Activated CD4-positive, alpha-beta T cell treated with anti-CD3 and anti-CD28 coated beads for 36 hours (primary cell): ENCODE measurements at regions of chr12 and their contacts with region 1.

Region 1: DNA sequence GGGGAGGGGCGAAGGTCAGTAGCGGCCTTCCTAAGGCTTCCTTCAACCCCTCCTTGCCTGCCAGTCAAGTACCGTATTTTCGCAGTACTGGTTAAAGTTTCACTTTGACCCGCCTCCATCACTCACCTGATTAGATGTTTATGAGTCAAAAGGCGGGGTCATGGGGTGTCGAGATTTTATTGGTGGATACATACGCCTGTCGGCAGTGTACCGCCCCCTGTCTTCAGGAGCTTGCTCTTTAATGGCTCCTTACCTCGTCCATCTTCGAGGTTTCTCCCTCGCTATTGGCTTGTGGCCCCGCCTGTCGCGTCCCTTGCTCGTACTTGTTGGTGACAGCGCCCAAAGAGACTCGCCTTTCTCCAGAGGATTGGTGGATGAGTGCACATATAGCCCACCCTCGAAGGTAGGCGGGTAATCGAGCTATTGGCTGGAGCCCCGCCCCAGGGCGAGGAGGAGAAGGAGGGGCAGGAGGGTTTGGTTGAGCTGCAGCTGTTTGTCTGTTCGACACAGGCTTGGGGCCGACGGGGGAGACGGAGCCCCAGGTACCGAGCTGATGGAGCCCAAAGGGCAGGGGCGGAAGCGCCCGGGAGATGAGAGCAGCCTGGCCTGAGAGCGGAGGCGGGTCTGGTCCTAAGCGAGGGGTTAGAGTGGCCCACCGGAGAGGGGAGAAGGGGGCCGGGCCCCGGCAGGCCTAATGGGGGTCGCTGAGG is at the start of gene RAB5B:
- DNase-seq: peak; percentile 98
- ATAC-seq: peak; percentile 93
- H3K4me3 Mint-ChIP-seq: no peak within 1 kb of the TSS
- H3K27ac Mint-ChIP-seq: no peak within 1 kb of the TSS
- H3K4me1 Mint-ChIP-seq: peaks cover 28% of the 10 kb centered on the region
- H3K27me3 Mint-ChIP-seq: no peaks in the 10 kb centered on the region
- total RNA-seq, gene RAB5B: 33.2 to 35.1 TPM

Region 2: DNA sequence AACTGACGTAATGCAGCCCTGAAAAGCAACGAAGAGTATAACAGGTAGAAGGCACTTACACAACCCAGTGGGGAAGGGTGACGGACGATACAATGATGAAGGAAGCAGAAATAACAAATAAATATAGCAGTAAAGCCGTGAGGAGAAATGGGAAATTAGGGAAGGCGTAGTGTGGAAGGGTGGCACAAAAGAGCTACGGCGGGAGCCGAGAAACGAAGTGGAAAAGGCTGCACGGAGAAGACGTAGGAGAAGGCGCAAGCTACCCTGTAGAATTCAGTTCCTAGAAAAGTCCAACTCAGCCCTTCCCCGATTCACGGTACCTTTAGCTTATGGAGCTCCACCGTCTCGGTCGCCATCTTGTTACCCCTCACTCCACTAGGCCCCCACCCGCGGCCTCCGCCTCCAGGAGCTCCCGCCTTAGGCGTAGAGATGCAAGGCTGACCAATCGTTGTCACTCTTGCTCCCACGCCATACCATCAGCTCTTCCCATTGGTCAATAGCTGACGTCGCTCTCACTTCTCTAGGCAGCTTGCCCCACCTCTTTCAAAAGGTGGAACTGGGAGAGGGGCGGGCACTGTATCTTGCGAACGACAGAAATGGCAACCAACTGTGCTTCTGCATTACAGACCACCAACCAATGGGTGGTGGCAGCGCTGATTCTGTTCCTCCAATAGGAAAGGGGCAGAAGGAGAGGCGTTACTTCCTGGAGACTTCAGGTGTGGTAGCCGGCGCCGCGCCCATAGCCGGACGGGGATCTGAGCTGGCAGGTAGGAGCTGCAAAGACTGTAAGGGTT is 156.2 kb before region 1 on chr12 and contains the starts of genes ORMDL2 and SARNP:
- CTCF ChIA-PET with region 1: interaction called, 4 read pairs
- POLR2A ChIA-PET with region 1: interaction called, 13 read pairs
- intact Hi-C with region 1: loop called in 1 of 2 experiments (anchors 1 kb)
- DNase-seq: peak; percentile 97
- ATAC-seq: peak; percentile 98
- H3K4me3 Mint-ChIP-seq: no peak within 1 kb of the TSS
- H3K27ac Mint-ChIP-seq: no peak within 1 kb of the TSS
- H3K4me1 Mint-ChIP-seq: peaks cover 49% of the 10 kb centered on the region
- H3K27me3 Mint-ChIP-seq: no peaks in the 10 kb centered on the region
- total RNA-seq, gene ORMDL2: 29.4 to 35.6 TPM
- total RNA-seq, gene SARNP: 111 to 114 TPM

Region 3: GRCh38 chr12:55955800-55956508 is 17.8 kb before region 1 on chr12:
- CTCF ChIA-PET with region 1: interaction called, 10 read pairs
- POLR2A ChIA-PET with region 1: interaction called, 9 read pairs
- intact Hi-C with region 1: no loop called
- DNase-seq: peak; percentile 76
- ATAC-seq: peak; percentile 75
- H3K4me3 Mint-ChIP-seq: no peak overlapping the region
- H3K27ac Mint-ChIP-seq: no peak overlapping the region
- H3K4me1 Mint-ChIP-seq: peaks cover 18% of the 10 kb centered on the region
- H3K27me3 Mint-ChIP-seq: no peaks in the 10 kb centered on the region

Region 4: GRCh38 chr12:56007564-56008559 is 34.1 kb after region 1 on chr12:
- CTCF ChIA-PET with region 1: interaction called, 5 read pairs
- POLR2A ChIA-PET with region 1: interaction called, 4 read pairs
- intact Hi-C with region 1: loop called in 1 of 2 experiments (anchors 1 kb)
- DNase-seq: peak; percentile 82
- ATAC-seq: peak; percentile 83
- H3K4me3 Mint-ChIP-seq: peak overlapping the region; percentile 78
- H3K27ac Mint-ChIP-seq: peak overlapping the region; percentile 92
- H3K4me1 Mint-ChIP-seq: peaks cover 28% of the 10 kb centered on the region
- H3K27me3 Mint-ChIP-seq: no peaks in the 10 kb centered on the region

Region 5: GRCh38 chr12:56134897-56135296 is 161.1 kb after region 1 on chr12:
- CTCF ChIA-PET with region 1: no interaction called
- POLR2A ChIA-PET with region 1: no interaction called
- intact Hi-C with region 1: no loop called
- DNase-seq: no peak
- ATAC-seq: no peak
- H3K4me3 Mint-ChIP-seq: no peak overlapping the region
- H3K27ac Mint-ChIP-seq: no peak overlapping the region
- H3K4me1 Mint-ChIP-seq: peaks cover 63% of the 10 kb centered on the region
- H3K27me3 Mint-ChIP-seq: no peaks in the 10 kb centered on the region